ENCODE measurements at regions of chr10 and their contacts with region 1.

Region 1: GRCh38 chr10:78302989-78303854 is 269.6 kb downstream of the RPS24 start:
- DNase-seq: peak; percentile 85
- ATAC-seq: peak; percentile 100
- H3K4me3 ChIP-seq: peak overlapping the region; percentile 62
- H3K27ac ChIP-seq: peak overlapping the region; percentile 69
- H3K4me1 ChIP-seq: peaks cover 3% of the 10 kb centered on the region; the same call in 1 of the 2 replicates
- H3K27me3 ChIP-seq: 0 out of 2 replicates have a peak, but pooled peaks cover 2% of the 10 kb centered on the region
- CTCF ChIP-seq: peak; percentile 75
- POLR2A ChIP-seq: peak; percentile 63; the same call in 1 of the 2 replicates
- RAD21 ChIP-seq: peak; percentile 77

Region 2: GRCh38 chr10:78362406-78363022 is 59.3 kb after region 1 on chr10:
- CTCF ChIA-PET with region 1: no interaction called
- POLR2A ChIA-PET with region 1: no interaction called
- dilution Hi-C with region 1: no loop called
- in situ Hi-C with region 1: no loop called
- intact Hi-C with region 1: no loop called
- DNase-seq: no peak
- ATAC-seq: no peak
- H3K4me3 ChIP-seq: no peak overlapping the region
- H3K27ac ChIP-seq: no peak overlapping the region
- H3K4me1 ChIP-seq: peaks cover 2% of the 10 kb centered on the region; the same call in 1 of the 2 replicates
- H3K27me3 ChIP-seq: peaks cover 70% of the 10 kb centered on the region
- CTCF ChIP-seq: no peak
- POLR2A ChIP-seq: no peak
- RAD21 ChIP-seq: no peak

Region 3: DNA sequence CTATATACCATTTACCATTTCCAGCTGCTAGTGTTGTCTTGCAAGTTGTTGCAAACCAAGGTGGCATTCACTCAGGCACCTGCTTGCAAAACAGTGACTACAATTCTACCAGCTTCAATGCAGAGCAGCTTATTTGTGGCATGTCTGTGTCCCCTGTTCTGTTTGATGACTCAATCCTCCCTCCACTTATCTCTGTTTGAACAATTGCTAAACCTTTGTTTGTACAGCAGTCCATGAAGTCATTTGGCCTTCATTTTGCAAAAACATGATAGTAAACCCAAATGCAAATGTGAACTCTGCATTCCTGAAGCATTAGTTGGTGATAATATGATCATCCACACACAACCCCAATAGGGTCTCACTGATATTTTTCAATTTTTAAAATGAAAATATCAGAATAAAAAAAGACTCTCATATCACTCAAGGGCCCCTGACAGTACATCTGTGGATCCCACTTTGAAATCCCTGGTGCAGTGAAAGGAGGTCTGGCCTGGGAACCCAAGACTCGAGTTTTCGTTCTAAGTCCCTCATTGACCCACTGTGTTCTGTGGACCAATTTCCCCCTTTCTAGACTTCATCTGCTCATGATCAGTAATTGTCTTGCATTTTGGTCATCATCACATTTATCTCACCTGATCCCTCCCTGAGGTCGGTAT is 155.9 kb after region 1 on chr10:
- CTCF ChIA-PET with region 1: no interaction called
- POLR2A ChIA-PET with region 1: no interaction called
- dilution Hi-C with region 1: no loop called
- in situ Hi-C with region 1: no loop called
- intact Hi-C with region 1: no loop called
- DNase-seq: peak; percentile 90
- ATAC-seq: peak; percentile 69
- H3K4me3 ChIP-seq: no peak overlapping the region
- H3K27ac ChIP-seq: no peak overlapping the region
- H3K4me1 ChIP-seq: peaks cover 14% of the 10 kb centered on the region
- H3K27me3 ChIP-seq: no peaks in the 10 kb centered on the region
- CTCF ChIP-seq: no peak
- POLR2A ChIP-seq: no peak
- RAD21 ChIP-seq: peak; percentile 6; the same call in 1 of the 2 replicates

Region 4: GRCh38 chr10:78541481-78542140 is 238.4 kb after region 1 on chr10:
- CTCF ChIA-PET with region 1: no interaction called
- POLR2A ChIA-PET with region 1: no interaction called
- dilution Hi-C with region 1: no loop called
- in situ Hi-C with region 1: no loop called
- intact Hi-C with region 1: loop called (anchors 1 kb)
- DNase-seq: peak; percentile 68
- ATAC-seq: peak; percentile 54
- H3K4me3 ChIP-seq: no peak overlapping the region
- H3K27ac ChIP-seq: peak overlapping the region; percentile 74
- H3K4me1 ChIP-seq: peaks cover 36% of the 10 kb centered on the region
- H3K27me3 ChIP-seq: peaks cover 3% of the 10 kb centered on the region; the same call in 1 of the 2 replicates
- CTCF ChIP-seq: no peak
- POLR2A ChIP-seq: no peak
- RAD21 ChIP-seq: no peak

Region 5: DNA sequence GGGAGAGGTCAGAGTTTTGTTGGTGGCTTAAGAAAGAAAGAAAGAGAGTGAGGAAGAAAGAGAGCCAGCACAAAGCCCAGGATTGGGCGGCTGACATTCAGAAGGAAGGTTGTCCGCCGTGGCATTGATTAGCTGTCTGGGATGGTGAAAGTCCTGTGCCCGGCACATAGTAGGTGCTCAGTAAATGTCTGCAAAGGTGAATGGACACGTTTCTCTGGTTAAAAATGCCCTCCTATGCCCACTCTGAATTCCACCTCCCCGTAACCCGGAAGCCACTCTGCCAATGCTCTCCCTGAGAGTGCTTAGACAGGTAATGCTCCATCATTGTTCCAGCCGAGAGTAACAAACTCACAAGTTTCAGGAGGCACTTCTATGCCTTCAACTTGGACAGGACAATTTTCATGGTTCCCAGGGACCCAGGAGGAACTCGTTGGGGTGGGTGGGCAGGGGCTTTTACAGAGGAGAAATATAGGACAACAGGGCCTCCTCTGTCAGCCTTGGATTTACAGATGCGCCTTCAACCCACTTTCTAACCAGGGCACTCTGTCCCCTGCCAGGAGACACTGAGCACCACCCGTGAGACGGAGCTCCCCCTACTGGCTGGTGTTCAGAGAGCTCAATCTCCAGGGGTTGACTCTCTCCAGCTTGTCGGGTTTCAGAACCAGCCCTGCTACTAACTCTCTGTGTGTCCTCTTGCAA is 354.1 kb after region 1 on chr10:
- CTCF ChIA-PET with region 1: no interaction called
- POLR2A ChIA-PET with region 1: no interaction called
- dilution Hi-C with region 1: no loop called
- in situ Hi-C with region 1: no loop called
- intact Hi-C with region 1: loop called (anchors 5 kb)
- DNase-seq: peak; percentile 43
- ATAC-seq: peak; percentile 88
- H3K4me3 ChIP-seq: no peak overlapping the region
- H3K27ac ChIP-seq: no peak overlapping the region
- H3K4me1 ChIP-seq: 0 out of 2 replicates have a peak, but pooled peaks cover 2% of the 10 kb centered on the region
- H3K27me3 ChIP-seq: peaks cover 5% of the 10 kb centered on the region; the same call in 1 of the 2 replicates
- CTCF ChIP-seq: peak; percentile 73
- POLR2A ChIP-seq: no peak
- RAD21 ChIP-seq: peak; percentile 78

Region 6: GRCh38 chr10:78972947-78973900 is 670.0 kb after region 1 on chr10:
- CTCF ChIA-PET with region 1: no interaction called
- POLR2A ChIA-PET with region 1: no interaction called
- dilution Hi-C with region 1: no loop called
- in situ Hi-C with region 1: no loop called
- intact Hi-C with region 1: loop called (anchors 10 kb)
- DNase-seq: peak; percentile 95
- ATAC-seq: peak; percentile 69
- H3K4me3 ChIP-seq: 0 out of 2 replicates have a peak overlapping the region, but pooled peaks have one; percentile 3
- H3K27ac ChIP-seq: peak overlapping the region; percentile 98
- H3K4me1 ChIP-seq: peaks cover 38% of the 10 kb centered on the region
- H3K27me3 ChIP-seq: no peaks in the 10 kb centered on the region
- CTCF ChIP-seq: no peak
- POLR2A ChIP-seq: peak; percentile 69
- RAD21 ChIP-seq: no peak; the same call in 1 of the 2 replicates